Activated B cell treated with CpG ODN at 0.5 μM for 24 hours (primary cell): ENCODE measurements at regions of chr18 and their contacts with region 1.

Region 1: GRCh38 chr18:45664824-45665763 is 49.8 kb downstream of the SLC14A2 start:
- DNase-seq: no peak
- ATAC-seq: peak; percentile 80
- H3K4me3 Mint-ChIP-seq: no peak overlapping the region
- H3K27ac Mint-ChIP-seq: peak overlapping the region; percentile 25
- H3K4me1 Mint-ChIP-seq: peaks cover 33% of the 10 kb centered on the region
- H3K27me3 Mint-ChIP-seq: no peaks in the 10 kb centered on the region
- CTCF ChIP-seq: no peak

Region 2: GRCh38 chr18:45576931-45577330 is 88.2 kb before region 1 on chr18:
- CTCF ChIA-PET with region 1: no interaction called
- POLR2A ChIA-PET with region 1: no interaction called
- intact Hi-C with region 1: no loop called
- DNase-seq: no peak
- ATAC-seq: no peak
- H3K4me3 Mint-ChIP-seq: no peak overlapping the region
- H3K27ac Mint-ChIP-seq: no peak overlapping the region
- H3K4me1 Mint-ChIP-seq: no peaks in the 10 kb centered on the region
- H3K27me3 Mint-ChIP-seq: peaks cover 6% of the 10 kb centered on the region
- CTCF ChIP-seq: no peak

Region 3: GRCh38 chr18:45755934-45756333 is 90.8 kb after region 1 on chr18:
- CTCF ChIA-PET with region 1: no interaction called
- POLR2A ChIA-PET with region 1: no interaction called
- intact Hi-C with region 1: no loop called
- DNase-seq: no peak
- ATAC-seq: no peak
- H3K4me3 Mint-ChIP-seq: no peak overlapping the region
- H3K27ac Mint-ChIP-seq: no peak overlapping the region
- H3K4me1 Mint-ChIP-seq: no peaks in the 10 kb centered on the region
- H3K27me3 Mint-ChIP-seq: peaks cover 47% of the 10 kb centered on the region
- CTCF ChIP-seq: no peak

Region 4: DNA sequence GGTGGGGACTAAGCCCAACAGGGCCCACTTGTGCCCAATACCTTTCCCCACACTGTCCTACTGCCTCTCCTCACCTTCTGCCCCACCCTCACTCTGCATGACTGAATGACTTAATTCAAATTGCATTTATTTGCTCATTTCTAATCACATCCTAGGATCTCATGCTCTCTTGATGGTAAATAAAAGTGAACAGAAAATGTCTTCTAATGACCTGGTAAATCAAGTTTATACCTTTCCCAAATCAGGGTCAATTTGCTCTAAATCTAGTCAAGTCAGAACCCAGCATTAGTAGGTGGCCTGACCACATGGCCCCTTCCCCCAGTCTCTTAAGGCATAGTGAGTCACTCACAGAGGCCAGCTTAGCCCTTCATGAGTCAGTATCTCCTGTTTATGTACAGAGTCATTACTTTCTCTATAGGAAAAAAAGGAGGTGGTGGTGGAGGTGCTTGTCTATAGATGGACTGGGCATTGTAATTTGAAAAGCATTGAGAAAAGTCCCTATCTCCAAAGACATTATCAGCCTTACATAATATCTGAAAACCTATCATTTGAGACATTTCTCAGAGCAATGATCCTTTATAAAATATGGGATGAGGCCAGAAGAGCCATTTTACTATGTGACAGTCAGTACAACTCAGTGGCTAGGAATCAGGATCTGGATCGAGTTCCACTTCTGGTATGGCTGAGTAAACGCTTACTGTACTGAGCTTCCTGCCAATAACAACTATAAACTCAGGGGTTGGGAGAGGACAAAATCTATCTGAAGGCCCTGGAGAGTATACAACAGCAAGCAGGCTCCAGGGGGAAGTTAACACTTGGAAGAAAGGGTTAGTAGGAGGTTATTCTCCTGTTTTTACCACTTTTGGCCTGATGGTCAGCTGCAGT is 137.8 kb after region 1 on chr18:
- CTCF ChIA-PET with region 1: interaction called, 4 read pairs
- POLR2A ChIA-PET with region 1: no interaction called
- intact Hi-C with region 1: loop called (anchors 1 kb)
- DNase-seq: no peak
- ATAC-seq: no peak
- H3K4me3 Mint-ChIP-seq: no peak overlapping the region
- H3K27ac Mint-ChIP-seq: no peak overlapping the region
- H3K4me1 Mint-ChIP-seq: no peaks in the 10 kb centered on the region
- H3K27me3 Mint-ChIP-seq: peaks cover 14% of the 10 kb centered on the region
- CTCF ChIP-seq: no peak

Region 5: GRCh38 chr18:45850021-45850420 is 184.9 kb after region 1 on chr18:
- CTCF ChIA-PET with region 1: interaction called, 6 read pairs
- POLR2A ChIA-PET with region 1: no interaction called
- intact Hi-C with region 1: loop called (anchors 1 kb)
- DNase-seq: no peak
- ATAC-seq: peak; percentile 86
- H3K4me3 Mint-ChIP-seq: no peak overlapping the region
- H3K27ac Mint-ChIP-seq: peak overlapping the region; percentile 50
- H3K4me1 Mint-ChIP-seq: peaks cover 4% of the 10 kb centered on the region
- H3K27me3 Mint-ChIP-seq: no peaks in the 10 kb centered on the region
- CTCF ChIP-seq: no peak

Region 6: GRCh38 chr18:45910405-45911023 is 245.4 kb after region 1 on chr18:
- CTCF ChIA-PET with region 1: interaction called, 43 read pairs
- POLR2A ChIA-PET with region 1: no interaction called
- intact Hi-C with region 1: loop called (anchors 1 kb)
- DNase-seq: peak; percentile 23
- ATAC-seq: peak; percentile 72
- H3K4me3 Mint-ChIP-seq: no peak overlapping the region
- H3K27ac Mint-ChIP-seq: no peak overlapping the region
- H3K4me1 Mint-ChIP-seq: no peaks in the 10 kb centered on the region
- H3K27me3 Mint-ChIP-seq: no peaks in the 10 kb centered on the region
- CTCF ChIP-seq: peak; percentile 42

Region 7: GRCh38 chr18:46073474-46074331 is 408.6 kb after region 1 on chr18:
- CTCF ChIA-PET with region 1: interaction called, 31 read pairs
- POLR2A ChIA-PET with region 1: no interaction called
- intact Hi-C with region 1: loop called (anchors 1 kb)
- DNase-seq: no peak
- ATAC-seq: peak; percentile 53
- H3K4me3 Mint-ChIP-seq: no peak overlapping the region
- H3K27ac Mint-ChIP-seq: no peak overlapping the region
- H3K4me1 Mint-ChIP-seq: peaks cover 17% of the 10 kb centered on the region
- H3K27me3 Mint-ChIP-seq: peaks cover 10% of the 10 kb centered on the region
- CTCF ChIP-seq: no peak